Gastrocnemius medialis (tissue), 4 donors: ENCODE measurements at regions of chr6 and their contacts with region 1.

Region 1: GRCh38 chr6:35611240-35611639 is 77.5 kb downstream of the FKBP5 start:
- DNase-seq: no peak
- ATAC-seq: peak; percentile 42 to 56
- H3K4me3 ChIP-seq: no peak overlapping the region
- H3K27ac ChIP-seq: peak overlapping the region; percentile 89 to 99 (median 92)
- H3K4me1 ChIP-seq: peaks cover 57 to 87% of the 10 kb centered on the region in 2 donors
- H3K27me3 ChIP-seq: no peaks in the 10 kb centered on the region
- CTCF ChIP-seq: no peak
- POLR2A ChIP-seq: no peak

Region 2: DNA sequence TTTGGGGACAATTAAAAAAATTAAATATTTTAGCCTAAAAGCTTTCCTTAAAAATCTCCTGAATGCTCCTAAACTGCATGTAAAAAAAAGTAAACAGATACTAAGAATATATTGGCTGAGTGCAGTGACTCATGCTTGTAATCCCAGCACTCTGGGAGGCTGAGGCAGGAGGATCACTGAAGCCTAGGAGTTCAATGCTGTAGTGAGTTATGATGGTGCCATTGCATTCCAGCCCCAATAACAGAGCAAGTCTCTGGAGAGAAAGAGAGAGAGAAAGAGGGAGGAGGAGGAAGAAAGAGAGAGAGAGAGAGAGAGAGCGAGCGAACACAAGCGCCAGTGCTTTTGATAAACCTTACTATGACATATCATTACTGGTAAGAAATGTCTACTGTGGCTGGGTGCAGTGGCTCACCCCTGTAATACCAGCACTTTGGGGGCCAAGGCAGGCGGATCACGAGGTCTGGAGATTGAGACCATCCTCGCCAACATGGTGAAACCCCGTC is 18.7 kb after region 1 on chr6:
- in situ Hi-C with region 1: no loop called
- intact Hi-C with region 1: loop called (anchors 2 kb)
- DNase-seq: no peak
- ATAC-seq: no peak
- H3K4me3 ChIP-seq: no peak overlapping the region
- H3K27ac ChIP-seq: peak overlapping the region; percentile 51 to 73 (median 54)
- H3K4me1 ChIP-seq: peaks cover 13 to 30% of the 10 kb centered on the region in 2 donors
- H3K27me3 ChIP-seq: no peaks in the 10 kb centered on the region
- CTCF ChIP-seq: no peak
- POLR2A ChIP-seq: no peak

Region 3: DNA sequence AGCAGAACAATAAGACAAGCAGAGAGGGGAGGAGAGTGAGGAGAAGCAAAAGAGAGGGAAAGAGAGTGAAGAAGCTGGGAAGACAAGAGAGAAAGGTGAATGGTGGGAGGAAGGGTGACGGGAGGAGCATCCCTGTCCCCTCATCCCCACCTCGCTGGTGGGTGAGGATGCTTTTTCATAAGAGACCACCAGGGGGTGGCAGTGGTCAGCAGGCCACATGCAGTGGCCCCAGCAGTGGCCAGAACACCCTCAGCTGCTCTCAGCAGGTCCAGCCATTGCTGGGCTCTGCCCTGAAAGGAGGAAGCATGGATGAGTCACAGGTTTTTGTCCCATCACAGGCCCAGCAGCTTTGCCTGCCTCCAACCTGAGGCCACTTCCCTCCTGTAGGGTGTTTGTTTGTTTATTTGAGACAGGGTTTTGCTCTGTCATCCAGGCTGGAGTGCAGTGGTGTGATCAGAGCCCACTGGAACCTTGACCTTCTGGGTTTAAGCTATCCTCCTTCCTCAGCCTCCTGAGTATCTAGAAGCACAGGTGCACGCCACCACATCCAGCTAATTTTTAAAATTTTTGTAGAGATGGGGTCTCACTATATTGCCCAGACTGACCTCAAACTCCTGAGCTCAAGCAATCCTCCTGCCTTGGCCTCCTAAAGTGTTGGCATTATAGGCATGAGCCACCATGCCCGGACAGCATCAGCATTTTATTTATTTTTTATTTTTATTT is 1418.2 kb after region 1 on chr6:
- in situ Hi-C with region 1: no loop called
- intact Hi-C with region 1: no loop called
- DNase-seq: peak; percentile 41 to 69
- ATAC-seq: peak; percentile 77 to 82
- H3K4me3 ChIP-seq: no peak overlapping the region
- H3K27ac ChIP-seq: no peak overlapping the region
- H3K4me1 ChIP-seq: no peaks in the 10 kb centered on the region
- H3K27me3 ChIP-seq: no peaks in the 10 kb centered on the region
- CTCF ChIP-seq: peak in 4 of 5 experiments; percentile 63 to 82 (median 76)
- POLR2A ChIP-seq: no peak